Endothelial cell of umbilical vein (primary cell): ENCODE measurements at regions of chr6 and their contacts with region 1.

Region 1: DNA sequence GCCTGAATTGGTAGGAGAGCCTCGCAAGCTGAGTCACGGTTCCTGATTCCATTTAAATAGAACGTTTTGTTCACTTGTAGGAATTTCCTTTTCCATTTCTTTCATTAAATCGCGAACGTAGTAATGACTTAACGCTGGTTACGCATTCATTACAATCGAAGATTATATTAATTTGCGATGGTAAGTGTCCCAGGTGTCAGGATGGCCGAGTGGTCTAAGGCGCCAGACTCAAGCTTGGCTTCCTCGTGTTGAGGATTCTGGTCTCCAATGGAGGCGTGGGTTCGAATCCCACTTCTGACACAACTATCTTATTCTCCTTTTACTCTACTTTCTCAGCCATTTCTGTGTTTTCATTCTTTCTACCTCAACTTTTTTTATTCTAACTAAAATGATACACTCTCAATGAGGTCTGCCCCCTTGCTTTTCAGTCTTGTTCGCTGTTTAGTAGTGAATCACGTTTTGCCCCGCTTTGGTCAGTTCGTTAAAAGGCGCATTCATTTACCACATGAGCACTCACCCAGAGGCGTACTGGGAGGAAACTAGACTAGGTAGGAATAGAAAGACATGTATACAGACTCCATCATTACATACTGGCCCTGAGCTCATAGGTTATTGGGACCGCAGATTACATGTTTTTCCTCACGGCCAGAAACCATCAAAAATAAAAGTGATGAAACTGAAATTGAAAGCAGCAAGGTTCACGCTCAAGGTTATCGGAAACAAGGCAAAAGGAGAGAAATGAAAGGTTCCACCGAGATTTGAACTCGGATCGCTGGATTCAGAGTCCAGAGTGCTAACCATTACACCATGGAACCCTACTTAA is 17.3 kb upstream of the TRIM27 start:
- DNase-seq: peak; percentile 96
- H3K4me3 ChIP-seq: peak overlapping the region; percentile 46 to 89 (median 87)
- H3K27ac ChIP-seq: peak overlapping the region; percentile 67
- H3K4me1 ChIP-seq: peaks cover 11% of the 10 kb centered on the region
- H3K27me3 ChIP-seq: no peaks in the 10 kb centered on the region
- CTCF ChIP-seq: no peak
- POLR2A ChIP-seq: no peak

Region 2: GRCh38 chr6:28542440-28543296 is 398.4 kb before region 1 on chr6:
- CTCF ChIA-PET with region 1: no interaction called
- POLR2A ChIA-PET with region 1: no interaction called
- dilution Hi-C with region 1: no loop called
- intact Hi-C with region 1: loop called (anchors 5 kb)
- DNase-seq: peak; percentile 70
- H3K4me3 ChIP-seq: no peak overlapping the region
- H3K27ac ChIP-seq: no peak overlapping the region
- H3K4me1 ChIP-seq: peaks cover 13% of the 10 kb centered on the region
- H3K27me3 ChIP-seq: peaks cover 0 to under 1% of the 10 kb centered on the region in 2 experiments
- CTCF ChIP-seq: peak in 1 of 2 donors; percentile 33
- POLR2A ChIP-seq: no peak

Region 3: GRCh38 chr6:28673800-28674671 is 267.0 kb before region 1 on chr6:
- CTCF ChIA-PET with region 1: no interaction called
- POLR2A ChIA-PET with region 1: no interaction called
- dilution Hi-C with region 1: no loop called
- intact Hi-C with region 1: loop called (anchors 5 kb)
- DNase-seq: peak; percentile 70
- H3K4me3 ChIP-seq: peak overlapping the region; percentile 1 to 74 (median 3)
- H3K27ac ChIP-seq: no peak overlapping the region
- H3K4me1 ChIP-seq: peaks cover 8% of the 10 kb centered on the region
- H3K27me3 ChIP-seq: peaks cover 5 to 6% of the 10 kb centered on the region in 2 experiments
- CTCF ChIP-seq: no peak
- POLR2A ChIP-seq: no peak

Region 4: DNA sequence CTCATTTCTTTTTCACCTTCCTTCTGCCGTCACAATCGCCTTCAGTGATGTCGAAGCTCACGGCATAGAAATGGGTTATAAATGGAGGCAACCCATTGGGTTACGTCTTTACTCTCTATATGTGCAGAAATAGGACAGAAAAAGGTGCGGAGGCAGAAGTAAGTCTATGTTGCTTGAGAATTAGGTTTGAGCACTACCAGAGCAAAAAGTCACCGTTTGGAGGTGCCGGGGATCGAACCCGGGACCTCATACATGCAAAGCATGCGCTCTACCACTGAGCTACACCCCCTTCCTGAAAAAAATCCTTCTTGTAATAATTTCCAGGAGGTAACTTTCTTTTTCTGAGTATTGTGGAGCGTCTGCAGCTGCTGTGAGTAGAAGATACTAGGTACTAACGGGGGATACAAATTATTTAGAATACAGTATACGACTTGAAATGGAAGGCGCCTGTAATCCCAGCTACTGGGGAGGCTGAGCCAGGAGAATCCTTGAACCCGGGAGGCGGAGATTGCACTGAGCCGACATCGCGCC is 151.5 kb before region 1 on chr6:
- CTCF ChIA-PET with region 1: no interaction called
- POLR2A ChIA-PET with region 1: no interaction called
- dilution Hi-C with region 1: no loop called
- intact Hi-C with region 1: loop called (anchors 2 kb)
- DNase-seq: peak; percentile 49
- H3K4me3 ChIP-seq: peak overlapping the region; percentile 5 to 65 (median 57)
- H3K27ac ChIP-seq: no peak overlapping the region
- H3K4me1 ChIP-seq: peaks cover under 1% of the 10 kb centered on the region
- H3K27me3 ChIP-seq: peaks cover 37 to 56% of the 10 kb centered on the region in 2 experiments
- CTCF ChIP-seq: no peak
- POLR2A ChIP-seq: no peak

Region 5: GRCh38 chr6:28895134-28895812 is 45.8 kb before region 1 on chr6:
- CTCF ChIA-PET with region 1: interaction called, 7 read pairs
- POLR2A ChIA-PET with region 1: no interaction called
- dilution Hi-C with region 1: no loop called
- intact Hi-C with region 1: loop called (anchors 1 kb)
- DNase-seq: peak; percentile 98
- H3K4me3 ChIP-seq: peak overlapping the region; percentile 22 to 82 (median 68)
- H3K27ac ChIP-seq: peak overlapping the region; percentile 88
- H3K4me1 ChIP-seq: peaks cover 6% of the 10 kb centered on the region
- H3K27me3 ChIP-seq: no peaks in the 10 kb centered on the region
- CTCF ChIP-seq: no peak
- POLR2A ChIP-seq: peak; percentile 92

Region 6: DNA sequence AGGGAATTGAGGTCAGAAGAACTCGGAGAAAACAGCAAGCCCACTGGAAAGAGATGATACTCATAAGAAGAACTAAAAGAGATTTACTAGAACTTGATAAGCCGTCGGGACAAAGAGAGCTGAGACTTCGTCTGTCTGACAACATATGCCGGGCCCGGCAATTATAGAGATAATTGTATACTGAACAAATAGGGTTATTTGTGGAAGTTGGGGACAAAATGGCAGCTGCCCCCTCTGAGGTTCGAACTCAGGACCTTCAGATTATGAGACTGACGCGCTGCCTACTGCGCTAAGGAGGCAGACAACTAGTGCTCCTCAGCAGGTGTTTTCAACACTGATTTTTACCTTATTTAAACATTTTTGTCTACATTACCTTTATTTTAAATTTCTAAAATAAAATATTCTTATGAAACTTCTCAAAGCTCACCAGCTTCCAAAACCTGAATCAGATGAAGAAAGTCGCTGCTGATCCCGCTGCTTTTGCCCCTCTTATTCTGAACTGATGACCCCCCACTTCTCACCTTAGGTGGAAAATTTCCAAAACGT is 12.0 kb after region 1 on chr6:
- CTCF ChIA-PET with region 1: no interaction called
- POLR2A ChIA-PET with region 1: no interaction called
- dilution Hi-C with region 1: no loop called
- intact Hi-C with region 1: loop called (anchors 1 kb)
- DNase-seq: peak; percentile 58
- H3K4me3 ChIP-seq: peak overlapping the region; percentile 24 to 87 (median 83)
- H3K27ac ChIP-seq: no peak overlapping the region
- H3K4me1 ChIP-seq: peaks cover 12% of the 10 kb centered on the region
- H3K27me3 ChIP-seq: peaks cover 0 to 16% of the 10 kb centered on the region in 2 experiments
- CTCF ChIP-seq: no peak
- POLR2A ChIP-seq: no peak

Region 7: GRCh38 chr6:29016559-29017427 is 75.7 kb after region 1 on chr6:
- CTCF ChIA-PET with region 1: interaction called, 6 read pairs
- POLR2A ChIA-PET with region 1: no interaction called
- dilution Hi-C with region 1: no loop called
- intact Hi-C with region 1: loop called (anchors 1 kb)
- DNase-seq: peak; percentile 86
- H3K4me3 ChIP-seq: peak overlapping the region; percentile 44 to 90 (median 80)
- H3K27ac ChIP-seq: no peak overlapping the region
- H3K4me1 ChIP-seq: peaks cover 9% of the 10 kb centered on the region
- H3K27me3 ChIP-seq: peaks cover 2 to 3% of the 10 kb centered on the region in 2 experiments
- CTCF ChIP-seq: peak; percentile 72 to 78
- POLR2A ChIP-seq: no peak